Astrocyte of the cerebellum (primary cell): ENCODE measurements at regions of chr17 and their contacts with region 1.

Region 1: DNA sequence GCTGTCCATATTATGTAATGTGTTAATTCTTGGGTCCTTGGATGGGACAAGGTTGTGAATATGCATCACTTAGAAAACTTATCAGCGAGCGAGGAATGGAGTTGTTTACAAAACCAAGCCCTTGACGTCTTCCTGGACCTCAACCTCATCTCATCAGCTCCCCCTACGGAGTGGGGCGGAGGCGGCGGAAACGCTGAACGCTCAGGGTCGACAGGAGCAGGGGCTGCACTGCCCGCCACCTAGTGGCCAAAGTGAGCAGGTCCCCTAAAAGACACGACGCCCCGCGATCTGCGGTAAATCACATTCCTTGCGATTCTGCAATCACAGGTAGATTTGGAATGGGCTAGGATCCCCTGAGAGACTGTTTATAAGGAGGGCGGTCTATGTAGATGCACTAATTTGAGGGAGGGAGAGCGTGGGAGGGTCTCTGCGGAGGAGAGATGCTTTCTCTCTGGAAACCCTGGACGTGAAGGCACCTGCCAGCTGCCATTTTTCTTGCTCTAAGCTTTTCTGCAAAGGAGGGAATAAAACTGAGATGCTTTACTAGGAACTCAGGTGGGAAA is 5.4 kb upstream of the ICAM2 start:
- DNase-seq: peak; percentile 18
- H3K4me3 ChIP-seq: no peak overlapping the region
- CTCF ChIP-seq: peak; percentile 95

Region 2: GRCh38 chr17:63919311-63919723 is 106.5 kb before region 1 on chr17:
- in situ Hi-C with region 1: no loop called
- DNase-seq: peak; percentile 13
- H3K4me3 ChIP-seq: no peak overlapping the region
- CTCF ChIP-seq: peak; percentile 97

Region 3: DNA sequence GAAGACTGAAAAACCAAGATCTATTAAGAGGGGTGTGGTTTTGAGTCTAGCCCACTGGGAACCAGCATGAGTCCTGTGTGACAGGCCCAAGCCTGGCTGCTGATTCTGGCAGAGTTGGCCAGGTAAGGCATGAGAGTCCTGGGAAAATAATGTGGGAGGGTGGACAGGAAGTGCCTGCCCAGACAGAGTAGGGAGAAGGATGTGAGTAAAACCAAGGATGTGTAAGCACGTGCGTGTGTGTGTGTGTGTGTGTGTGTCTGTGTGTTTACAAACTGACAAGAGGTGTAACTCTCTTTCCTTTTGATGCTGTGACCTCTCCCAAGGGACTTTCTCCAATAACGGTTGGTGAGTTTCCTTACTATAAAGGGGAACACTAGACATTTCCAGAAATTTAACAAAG is 252.8 kb after region 1 on chr17:
- in situ Hi-C with region 1: loop called (anchors 10 kb)
- DNase-seq: no peak
- H3K4me3 ChIP-seq: no peak overlapping the region
- CTCF ChIP-seq: no peak